HEK293T (cell line): ENCODE measurements at regions of chr10 and their contacts with region 1.

Region 1: GRCh38 chr10:102917962-102918816 is at the start of gene CNNM2:
- DNase-seq: peak; percentile 99

Region 2: GRCh38 chr10:102876747-102877153 is 41.4 kb before region 1 on chr10:
- CTCF ChIA-PET with region 1: no interaction called
- POLR2A ChIA-PET with region 1: no interaction called
- DNase-seq: no peak

Region 3: GRCh38 chr10:102904346-102904745 is 13.8 kb before region 1 on chr10:
- CTCF ChIA-PET with region 1: interaction called, 10 read pairs
- POLR2A ChIA-PET with region 1: no interaction called
- DNase-seq: no peak

Region 4: DNA sequence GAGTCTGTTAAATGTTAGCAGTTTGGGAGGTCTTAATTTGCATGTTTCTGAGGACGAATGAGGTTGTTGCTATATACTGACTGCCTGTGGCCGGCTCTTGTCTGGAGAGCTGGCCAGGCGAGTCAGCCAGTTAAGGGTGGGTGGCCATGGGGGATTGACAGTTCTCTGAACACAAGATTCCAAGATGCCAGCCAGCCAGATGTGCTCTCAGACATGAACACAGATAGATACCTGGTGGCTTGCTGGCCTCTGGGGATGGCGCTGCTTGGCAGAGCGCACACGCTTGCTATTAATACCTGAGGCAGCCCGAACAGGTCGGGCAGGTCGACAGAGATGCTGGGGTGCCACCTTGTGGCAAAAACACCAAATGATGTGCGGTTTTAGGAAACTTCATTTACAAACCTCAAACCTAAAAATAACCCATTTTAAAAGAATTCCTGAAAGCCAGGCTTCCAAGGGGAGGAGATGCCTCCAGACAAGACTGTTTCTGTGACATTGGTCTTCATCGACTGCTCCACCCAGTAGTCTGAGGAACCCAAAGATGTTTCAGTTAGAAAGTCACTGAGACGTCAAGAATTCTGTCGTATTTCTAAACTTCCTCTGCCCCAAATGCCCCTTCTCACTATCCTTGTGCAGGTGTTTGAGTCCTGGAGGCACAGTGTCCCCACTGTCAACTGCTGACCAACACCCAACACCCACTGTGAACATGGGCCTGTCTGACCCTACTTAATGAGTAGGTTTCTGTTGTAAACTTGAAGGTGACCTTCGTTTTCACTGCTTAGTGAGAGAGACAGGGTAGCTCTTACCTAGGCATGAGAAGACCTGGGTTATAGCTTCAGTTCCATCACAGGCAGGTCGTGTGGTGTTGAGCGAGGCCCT is 151.5 kb after region 1 on chr10:
- CTCF ChIA-PET with region 1: interaction called, 15 read pairs
- POLR2A ChIA-PET with region 1: no interaction called
- DNase-seq: peak; percentile 77

Region 5: DNA sequence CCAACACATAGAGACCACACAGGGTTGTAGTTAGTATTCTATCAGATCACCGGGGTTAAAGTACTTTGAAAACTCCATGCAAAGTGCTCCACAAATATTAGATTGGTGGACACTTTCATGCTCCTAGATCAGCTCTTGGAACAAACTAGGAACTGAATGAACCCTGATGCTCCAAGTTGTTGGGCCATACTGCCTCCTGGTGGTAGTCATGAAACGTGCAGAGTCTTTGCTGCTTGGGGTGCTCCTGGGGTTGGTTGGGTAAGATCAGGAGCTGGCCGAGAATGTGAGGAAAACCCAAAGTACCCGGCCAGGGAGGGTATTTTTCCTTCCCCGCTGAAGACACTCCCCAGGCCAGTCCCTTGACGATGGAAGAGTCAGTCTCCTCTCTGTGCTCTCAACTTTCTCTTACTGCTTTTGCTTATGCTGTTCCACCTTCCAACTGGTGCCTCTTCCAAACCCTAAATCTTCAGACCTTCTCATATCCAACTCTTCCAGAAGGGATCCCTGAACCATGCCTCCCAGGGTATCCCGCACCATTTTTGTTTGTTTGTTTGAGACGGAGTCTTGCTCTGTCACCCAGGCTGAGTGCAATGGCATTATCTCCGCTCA is 326.6 kb after region 1 on chr10:
- CTCF ChIA-PET with region 1: interaction called, 14 read pairs
- POLR2A ChIA-PET with region 1: no interaction called
- DNase-seq: peak; percentile 89